Activated CD4-positive, alpha-beta T cell treated with anti-CD3 and anti-CD28 coated beads for 36 hours (primary cell): ENCODE measurements at regions of chr16 and their contacts with region 1.

Region 1: GRCh38 chr16:67480833-67481560 is at the start of gene ATP6V0D1:
- DNase-seq: peak; percentile 100
- ATAC-seq: peak; percentile 92
- H3K4me3 Mint-ChIP-seq: peak within 1 kb of the TSS; percentile 97
- H3K27ac Mint-ChIP-seq: peak within 1 kb of the TSS; percentile 98
- H3K4me1 Mint-ChIP-seq: peaks cover 31% of the 10 kb centered on the region
- H3K27me3 Mint-ChIP-seq: no peaks in the 10 kb centered on the region
- total RNA-seq, gene ATP6V0D1: 16.3 to 17.3 TPM

Region 2: DNA sequence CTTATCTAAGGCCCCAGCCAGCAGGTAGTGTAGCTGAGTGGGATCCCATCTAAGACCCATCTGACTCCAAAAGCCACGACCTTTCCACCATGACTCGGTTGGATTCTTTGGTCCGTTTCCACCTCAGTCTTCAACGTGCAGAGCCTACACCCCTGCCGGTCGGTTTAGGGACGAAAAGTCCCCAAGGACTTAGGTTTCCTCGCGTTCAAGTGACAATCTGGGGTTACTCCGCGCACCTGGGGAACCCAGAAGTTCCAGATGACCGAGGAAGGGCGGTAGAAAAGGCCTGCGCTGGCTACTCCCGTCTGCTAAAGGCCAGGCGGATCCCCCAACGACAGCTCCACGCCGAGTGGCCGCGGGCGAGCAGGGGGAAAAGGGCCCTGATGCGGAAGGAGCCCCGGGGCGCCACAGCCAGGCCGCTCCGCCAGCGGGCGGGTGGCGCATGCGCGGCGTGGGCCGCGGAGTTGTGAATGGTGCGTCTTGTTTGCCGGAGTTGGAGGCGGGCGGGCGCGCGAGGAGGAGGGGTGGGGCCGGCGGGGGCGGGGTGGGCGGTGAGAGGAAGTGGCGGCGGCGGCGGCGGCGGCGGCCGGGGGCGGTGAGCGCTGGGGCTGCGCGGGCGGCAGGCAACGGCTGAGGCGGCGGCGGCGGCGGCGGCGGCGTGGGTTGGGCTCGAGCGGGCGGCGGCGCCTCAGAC is 452.3 kb before region 1 on chr16 and contains the start of gene CBFB:
- CTCF ChIA-PET with region 1: no interaction called
- POLR2A ChIA-PET with region 1: no interaction called
- intact Hi-C with region 1: loop called in 1 of 2 experiments (anchors 1 kb)
- DNase-seq: peak; percentile 95
- ATAC-seq: peak; percentile 90
- H3K4me3 Mint-ChIP-seq: peak within 1 kb of the TSS; percentile 87
- H3K27ac Mint-ChIP-seq: peak within 1 kb of the TSS; percentile 90
- H3K4me1 Mint-ChIP-seq: peaks cover 34% of the 10 kb centered on the region
- H3K27me3 Mint-ChIP-seq: no peaks in the 10 kb centered on the region
- total RNA-seq, gene CBFB: 84.6 to 90.2 TPM

Region 3: DNA sequence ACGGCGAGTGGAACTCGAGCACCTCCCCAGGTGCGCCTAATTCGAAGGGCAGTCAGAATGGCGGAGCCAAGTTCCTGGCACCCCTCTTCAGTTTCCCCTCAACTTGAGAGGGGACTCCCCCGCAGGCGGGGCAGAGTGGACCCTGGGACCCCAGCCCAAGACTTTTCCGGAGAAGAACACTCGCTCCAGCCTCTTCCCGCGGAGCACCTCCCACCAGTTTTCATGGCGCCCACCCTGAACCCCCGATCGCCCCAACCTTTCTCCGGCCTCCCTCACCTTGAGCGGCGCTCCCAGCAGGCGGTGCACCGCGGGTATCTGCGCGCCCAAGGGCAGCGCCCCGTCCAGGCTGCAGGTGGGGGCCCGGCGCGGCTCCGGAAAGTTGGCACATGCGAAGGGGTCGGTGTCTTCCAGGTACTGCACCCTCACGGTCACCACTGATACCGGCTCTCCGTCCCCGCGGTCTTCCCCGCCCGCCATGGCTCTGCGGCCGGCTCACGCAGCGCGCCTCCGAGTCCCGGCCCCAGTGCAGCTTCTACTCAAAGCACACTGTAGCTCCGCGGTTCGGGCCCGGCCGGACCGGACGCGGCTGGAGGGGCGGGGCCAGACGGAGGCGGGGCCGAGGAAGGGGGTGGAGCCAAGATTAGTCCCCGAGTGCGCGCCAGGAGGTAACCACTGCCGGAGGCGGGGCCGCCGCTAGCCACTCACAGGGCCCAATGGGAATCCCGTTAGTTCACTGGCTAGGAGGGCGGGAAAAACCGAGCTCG is 233.9 kb before region 1 on chr16 and contains the start of gene FHOD1:
- CTCF ChIA-PET with region 1: no interaction called
- POLR2A ChIA-PET with region 1: no interaction called
- intact Hi-C with region 1: loop called in 1 of 2 experiments (anchors 1 kb)
- DNase-seq: peak; percentile 99
- ATAC-seq: peak; percentile 74
- H3K4me3 Mint-ChIP-seq: peak within 1 kb of the TSS; percentile 87
- H3K27ac Mint-ChIP-seq: peak within 1 kb of the TSS; percentile 85
- H3K4me1 Mint-ChIP-seq: peaks cover 52% of the 10 kb centered on the region
- H3K27me3 Mint-ChIP-seq: peaks cover 11% of the 10 kb centered on the region
- total RNA-seq, gene FHOD1: 75.5 to 77.2 TPM

Region 4: DNA sequence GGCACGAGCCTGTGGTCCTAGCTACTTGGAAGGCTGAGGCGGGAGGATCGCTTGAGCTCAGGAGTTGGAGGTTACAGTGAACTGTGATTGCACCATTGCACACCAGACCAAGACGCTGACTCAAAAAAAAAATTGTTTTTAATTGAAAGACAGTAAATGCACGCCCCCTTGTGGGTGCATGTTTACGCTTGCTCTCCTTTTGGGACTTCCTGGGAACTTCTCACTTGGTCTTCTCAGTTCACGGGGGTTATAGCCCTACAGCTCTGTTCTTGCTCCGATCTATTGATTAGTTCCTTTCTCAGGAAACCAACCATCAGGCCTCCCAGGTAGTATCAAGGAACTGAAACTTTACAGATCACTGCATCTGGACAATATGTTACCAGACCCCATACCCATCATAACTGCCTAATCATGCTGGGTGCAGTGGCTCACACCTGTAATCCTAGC is 33.4 kb after region 1 on chr16:
- CTCF ChIA-PET with region 1: interaction called, 390 read pairs
- POLR2A ChIA-PET with region 1: no interaction called
- intact Hi-C with region 1: loop called (anchors 1 kb)
- DNase-seq: peak; percentile 91
- ATAC-seq: peak; percentile 91
- H3K4me3 Mint-ChIP-seq: no peak overlapping the region
- H3K27ac Mint-ChIP-seq: peak overlapping the region; percentile 55
- H3K4me1 Mint-ChIP-seq: peaks cover 8% of the 10 kb centered on the region
- H3K27me3 Mint-ChIP-seq: no peaks in the 10 kb centered on the region

Region 5: DNA sequence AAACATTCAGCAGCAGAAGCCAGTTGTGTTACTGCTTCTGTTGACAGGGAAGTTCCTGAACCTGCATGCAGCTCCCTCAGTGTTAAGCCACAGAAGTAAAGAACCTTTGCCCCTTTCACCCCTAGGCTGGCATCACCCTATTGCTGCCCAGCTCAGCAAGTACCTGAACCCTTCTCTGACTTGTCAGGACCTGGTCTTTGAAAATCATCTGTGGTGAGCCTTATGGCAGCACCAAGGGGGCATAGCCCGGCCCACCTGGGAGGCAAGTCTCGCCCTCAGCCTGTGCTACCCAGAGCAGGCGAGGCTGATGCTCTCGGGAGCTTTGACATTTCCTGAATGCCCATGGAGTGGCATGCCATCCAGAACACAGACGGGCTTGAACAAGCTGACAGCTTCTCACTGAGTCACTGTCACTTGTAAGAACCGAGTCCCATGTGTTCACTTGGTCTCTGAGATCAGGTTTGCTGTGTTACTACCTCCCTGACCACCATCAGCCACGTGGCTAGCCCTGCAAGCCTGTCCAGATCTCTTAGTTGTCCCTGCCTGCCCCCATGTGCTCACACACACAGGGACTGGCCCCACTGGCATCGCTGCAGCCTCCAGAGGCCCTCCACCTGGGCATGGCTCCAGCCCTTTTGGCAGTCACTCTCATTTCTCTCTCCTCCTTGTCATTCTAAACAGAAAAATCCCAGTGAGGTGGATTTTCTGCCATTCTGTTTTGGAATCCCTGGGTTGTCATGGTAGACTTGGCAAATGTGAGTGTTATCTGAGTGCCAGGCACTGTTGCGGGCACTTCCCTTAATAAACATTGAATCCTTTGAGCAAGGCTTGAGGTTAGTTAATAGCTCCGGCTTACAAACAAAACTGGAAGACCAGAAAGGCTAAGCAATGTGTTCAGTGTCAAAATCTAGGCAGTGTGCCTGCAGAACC is 161.0 kb after region 1 on chr16:
- CTCF ChIA-PET with region 1: interaction called, 3 read pairs
- POLR2A ChIA-PET with region 1: interaction called, 3 read pairs
- intact Hi-C with region 1: loop called in 1 of 2 experiments (anchors 1 kb)
- DNase-seq: no peak
- ATAC-seq: no peak
- H3K4me3 Mint-ChIP-seq: no peak overlapping the region
- H3K27ac Mint-ChIP-seq: no peak overlapping the region
- H3K4me1 Mint-ChIP-seq: peaks cover 12% of the 10 kb centered on the region
- H3K27me3 Mint-ChIP-seq: no peaks in the 10 kb centered on the region

Region 6: DNA sequence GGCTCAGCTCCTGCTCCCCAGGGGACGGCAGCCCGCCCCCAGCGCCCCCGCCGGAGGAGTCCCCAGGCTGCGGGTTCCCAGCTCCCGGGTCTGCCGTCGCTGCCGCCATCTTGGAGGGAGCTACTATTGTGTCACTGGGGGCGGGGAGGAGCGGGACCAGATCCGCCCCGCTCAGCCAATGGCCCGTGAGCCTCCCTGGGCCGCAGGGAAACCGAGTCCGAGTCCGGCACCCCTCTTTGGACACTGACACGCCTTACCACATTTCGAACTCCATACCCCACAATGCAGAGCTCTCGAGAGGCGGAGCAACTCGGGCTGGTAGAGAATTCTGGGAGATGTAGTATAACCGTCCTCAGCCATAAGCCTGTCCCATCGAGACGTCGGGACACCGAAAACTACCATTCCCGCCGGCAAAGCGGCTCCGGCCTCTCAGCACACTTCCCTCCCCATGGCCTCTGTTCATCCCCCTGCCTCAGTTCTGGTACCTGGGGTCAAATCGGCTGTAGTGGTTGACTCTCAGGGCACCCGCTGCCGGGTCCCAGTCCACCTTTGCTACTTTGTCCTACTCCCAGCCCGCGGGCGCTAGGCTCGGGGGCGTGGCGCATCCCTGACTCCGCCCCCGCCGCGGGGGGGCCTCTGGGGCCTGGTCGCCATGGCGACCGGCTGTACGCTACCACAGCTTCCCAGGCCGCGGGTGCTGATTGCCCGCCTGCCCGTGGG is 325.6 kb after region 1 on chr16 and contains the starts of genes RANBP10 and TSNAXIP1:
- CTCF ChIA-PET with region 1: no interaction called
- POLR2A ChIA-PET with region 1: interaction called, 3 read pairs
- intact Hi-C with region 1: loop called in 1 of 2 experiments (anchors 1 kb)
- DNase-seq: peak; percentile 98
- ATAC-seq: peak; percentile 96
- H3K4me3 Mint-ChIP-seq: peak within 1 kb of the TSS; percentile 91
- H3K27ac Mint-ChIP-seq: peak within 1 kb of the TSS; percentile 91
- H3K4me1 Mint-ChIP-seq: peaks cover 39% of the 10 kb centered on the region
- H3K27me3 Mint-ChIP-seq: no peaks in the 10 kb centered on the region
- total RNA-seq, gene RANBP10: 15.6 to 18.0 TPM
- total RNA-seq, gene TSNAXIP1: 0.62 to 1.1 TPM